ENCODE measurements at regions of chr3 and their contacts with region 1.

Region 1: GRCh38 chr3:47989981-47990440 is 26.2 kb downstream of the MAP4 start:
- DNase-seq: peak; percentile 69
- H3K4me3 ChIP-seq: no peak overlapping the region
- H3K27ac ChIP-seq: no peak overlapping the region
- H3K4me1 ChIP-seq: no peaks in the 10 kb centered on the region
- H3K27me3 ChIP-seq: no peaks in the 10 kb centered on the region
- CTCF ChIP-seq: peak; percentile 88

Region 2: DNA sequence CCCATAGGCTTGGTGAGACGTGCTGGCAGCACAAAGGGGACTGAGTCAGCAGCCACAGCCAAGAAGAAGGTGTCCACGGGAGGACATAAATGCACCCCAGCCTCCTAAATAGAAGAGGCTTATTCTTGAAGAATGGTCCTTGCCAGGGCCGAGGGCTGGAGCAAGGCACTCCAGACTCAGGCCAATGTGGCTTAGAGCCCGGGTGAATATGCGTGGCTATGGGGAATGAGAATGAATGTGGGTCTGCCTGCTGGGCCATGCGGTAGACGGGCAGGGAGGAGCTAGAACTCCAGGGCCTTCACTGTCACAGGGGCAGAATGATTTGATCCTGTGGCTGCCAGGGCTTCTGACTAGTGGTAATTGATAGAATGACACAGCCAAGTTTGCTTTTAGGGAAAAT is 153.0 kb before region 1 on chr3:
- intact Hi-C with region 1: loop called (anchors 5 kb)
- DNase-seq: no peak
- H3K4me3 ChIP-seq: no peak overlapping the region
- H3K27ac ChIP-seq: no peak overlapping the region
- H3K4me1 ChIP-seq: no peaks in the 10 kb centered on the region
- H3K27me3 ChIP-seq: no peaks in the 10 kb centered on the region
- CTCF ChIP-seq: no peak

Region 3: GRCh38 chr3:48151058-48151806 is 161.2 kb after region 1 on chr3:
- intact Hi-C with region 1: loop called (anchors 5 kb)
- DNase-seq: peak; percentile 74
- H3K4me3 ChIP-seq: no peak overlapping the region
- H3K27ac ChIP-seq: no peak overlapping the region
- H3K4me1 ChIP-seq: no peaks in the 10 kb centered on the region
- H3K27me3 ChIP-seq: no peaks in the 10 kb centered on the region
- CTCF ChIP-seq: peak; percentile 80

Region 4: DNA sequence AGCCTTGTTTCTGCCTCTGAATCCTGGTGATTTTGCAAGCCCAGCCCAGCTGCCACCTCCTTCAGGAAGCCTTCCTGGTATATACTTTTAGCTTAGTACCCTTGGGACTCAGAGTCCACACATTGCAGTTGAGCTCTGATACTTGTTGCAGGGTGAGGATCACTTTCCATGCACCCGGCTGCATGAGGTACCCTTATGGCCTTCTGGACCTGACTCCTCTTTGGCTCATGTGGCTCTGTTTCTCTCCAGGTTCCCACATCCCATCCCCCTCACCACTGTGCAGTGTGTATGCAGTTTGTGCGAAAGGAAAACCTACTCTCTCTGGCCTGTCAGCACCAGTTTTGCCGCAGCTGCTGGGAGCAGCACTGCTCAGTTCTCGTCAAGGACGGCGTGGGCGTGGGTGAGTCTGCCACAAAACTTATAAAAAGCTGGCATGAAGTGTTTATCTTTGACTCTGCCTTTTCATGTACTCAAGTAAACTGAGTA is 976.9 kb after region 1 on chr3:
- intact Hi-C with region 1: no loop called
- DNase-seq: peak; percentile 45
- H3K4me3 ChIP-seq: no peak overlapping the region
- H3K27ac ChIP-seq: peak overlapping the region; percentile 65
- H3K4me1 ChIP-seq: peaks cover 4% of the 10 kb centered on the region
- H3K27me3 ChIP-seq: no peaks in the 10 kb centered on the region
- CTCF ChIP-seq: no peak

Measured in colonic mucosa (tissue), 4 donors.